HEK293 (cell line): ENCODE measurements at regions of chr18 and their contacts with region 1.

Region 1: GRCh38 chr18:59459369-59460079 is 100.5 kb upstream of the LMAN1 start:
- H3K4me3 ChIP-seq: no peak overlapping the region
- H3K27ac ChIP-seq: peak overlapping the region; percentile 43; the same call in 1 of the 2 replicates
- H3K4me1 ChIP-seq: peaks cover 22% of the 10 kb centered on the region
- CTCF ChIP-seq: peak; percentile 41; the same call in 1 of the 2 replicates

Region 2: DNA sequence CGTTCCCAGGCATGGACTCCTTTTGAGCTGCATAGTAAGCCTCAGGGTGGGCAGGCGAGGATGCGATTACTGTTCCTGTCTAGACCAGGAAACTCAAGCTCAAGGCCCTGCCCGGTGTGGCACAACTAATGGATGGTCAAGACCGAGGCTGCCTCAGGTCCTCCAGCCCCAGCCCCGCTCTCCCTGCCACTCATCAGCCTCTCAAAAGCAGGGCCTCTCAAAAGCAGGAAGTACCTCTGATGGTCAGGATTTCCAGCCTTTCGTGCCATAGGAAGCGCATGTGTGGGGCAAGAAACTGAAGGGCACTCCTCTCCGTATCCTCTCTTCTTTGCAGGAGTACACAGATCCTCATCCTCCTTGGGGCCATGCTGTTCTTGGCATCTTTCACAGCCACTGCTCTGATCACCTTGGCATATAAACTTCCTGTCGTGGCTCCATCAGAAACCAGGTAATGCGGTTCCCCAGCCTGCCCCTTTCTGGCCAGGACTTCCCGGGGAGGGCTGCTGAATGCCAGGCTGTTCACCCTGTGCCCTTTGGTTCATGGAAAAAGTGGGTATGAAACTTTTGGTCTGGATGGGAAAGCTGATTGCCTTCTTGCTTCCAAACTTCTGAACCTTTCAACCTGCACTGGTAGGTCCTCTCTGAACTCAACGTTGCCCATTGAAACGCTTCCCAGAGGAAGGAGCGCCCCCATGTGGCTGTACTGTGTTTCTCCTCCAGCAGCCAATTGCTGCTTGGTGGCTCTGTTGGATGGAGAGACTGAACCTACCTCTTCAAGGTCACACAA is 402.6 kb before region 1 on chr18:
- CTCF ChIA-PET with region 1: no interaction called
- POLR2A ChIA-PET with region 1: no interaction called
- H3K4me3 ChIP-seq: no peak overlapping the region
- H3K27ac ChIP-seq: 0 out of 2 replicates have a peak overlapping the region, but pooled peaks have one; percentile 11
- H3K4me1 ChIP-seq: peaks cover 23% of the 10 kb centered on the region
- CTCF ChIP-seq: peak; percentile 79

Region 3: DNA sequence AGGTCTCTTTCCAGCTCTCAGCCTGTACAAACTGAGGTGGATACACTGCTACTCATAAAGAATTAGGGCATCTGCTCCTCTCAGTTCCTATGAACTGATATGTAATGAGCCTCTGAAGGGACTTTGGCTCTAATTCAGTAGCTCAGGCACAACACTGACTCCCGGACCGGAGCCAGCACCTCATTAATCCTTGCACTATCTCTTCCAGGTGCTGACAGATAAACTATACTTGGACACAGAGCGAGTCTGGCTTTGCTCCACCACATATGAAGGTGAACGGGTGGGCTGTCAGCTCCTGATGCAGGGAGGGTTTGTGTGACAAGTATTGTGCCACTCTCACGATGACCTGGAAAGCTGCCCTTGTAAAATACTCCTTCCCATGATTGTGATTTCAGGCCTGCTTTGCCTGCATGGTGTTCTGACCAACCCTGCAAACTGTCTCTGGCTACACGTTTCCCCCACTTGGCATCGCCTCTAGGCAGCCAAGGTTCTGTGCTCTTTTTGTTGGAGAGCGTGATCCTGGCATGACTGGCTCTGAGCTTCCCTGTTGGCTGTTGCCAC is 11.1 kb after region 1 on chr18:
- CTCF ChIA-PET with region 1: interaction called, 15 read pairs
- POLR2A ChIA-PET with region 1: no interaction called
- H3K4me3 ChIP-seq: no peak overlapping the region
- H3K27ac ChIP-seq: no peak overlapping the region
- H3K4me1 ChIP-seq: no peaks in the 10 kb centered on the region
- CTCF ChIP-seq: no peak

Region 4: GRCh38 chr18:59516356-59517155 is 57.0 kb after region 1 on chr18:
- CTCF ChIA-PET with region 1: interaction called, 5 read pairs
- POLR2A ChIA-PET with region 1: interaction called, 14 read pairs
- H3K4me3 ChIP-seq: no peak overlapping the region
- H3K27ac ChIP-seq: no peak overlapping the region; the same call in 1 of the 2 replicates
- H3K4me1 ChIP-seq: peaks cover 22% of the 10 kb centered on the region
- CTCF ChIP-seq: no peak

Region 5: GRCh38 chr18:59606193-59607077 is 146.9 kb after region 1 on chr18:
- CTCF ChIA-PET with region 1: interaction called, 19 read pairs
- POLR2A ChIA-PET with region 1: no interaction called
- H3K4me3 ChIP-seq: no peak overlapping the region
- H3K27ac ChIP-seq: peak overlapping the region; percentile 73
- H3K4me1 ChIP-seq: peaks cover 22% of the 10 kb centered on the region
- CTCF ChIP-seq: no peak

Region 6: GRCh38 chr18:59631583-59632181 is 172.2 kb after region 1 on chr18:
- CTCF ChIA-PET with region 1: interaction called, 69 read pairs
- POLR2A ChIA-PET with region 1: no interaction called
- H3K4me3 ChIP-seq: no peak overlapping the region
- H3K27ac ChIP-seq: no peak overlapping the region
- H3K4me1 ChIP-seq: 0 out of 2 replicates have a peak, but pooled peaks cover 4% of the 10 kb centered on the region
- CTCF ChIP-seq: peak; percentile 51; the same call in 1 of the 2 replicates

Region 7: DNA sequence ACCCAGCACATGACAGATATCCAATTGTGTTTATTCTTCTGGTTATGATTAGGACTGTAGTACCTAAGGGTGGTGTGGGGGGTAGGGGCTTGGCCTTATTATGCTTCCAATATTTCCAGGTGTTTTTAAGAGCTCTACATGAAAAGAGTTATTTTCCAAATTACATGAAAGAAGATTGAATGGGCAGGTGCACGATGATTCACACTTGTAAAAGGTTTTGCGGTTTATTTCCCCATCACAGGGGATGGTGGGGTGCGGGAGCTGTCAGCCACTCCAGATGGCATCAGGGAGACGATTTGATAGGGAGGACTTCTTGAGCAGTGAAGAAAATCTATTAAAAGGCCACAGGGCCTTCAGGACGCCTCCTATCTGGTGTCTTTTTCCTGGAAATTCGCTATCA is 252.8 kb after region 1 on chr18:
- CTCF ChIA-PET with region 1: no interaction called
- POLR2A ChIA-PET with region 1: no interaction called
- H3K4me3 ChIP-seq: no peak overlapping the region
- H3K27ac ChIP-seq: no peak overlapping the region
- H3K4me1 ChIP-seq: no peaks in the 10 kb centered on the region
- CTCF ChIP-seq: no peak